GM18951 (cell line): ENCODE measurements at regions of chr3 and their contacts with region 1.

Region 1: GRCh38 chr3:50121416-50122032 is 32.8 kb downstream of the RBM5 start:
- POLR2A ChIP-seq: no peak

Region 2: DNA sequence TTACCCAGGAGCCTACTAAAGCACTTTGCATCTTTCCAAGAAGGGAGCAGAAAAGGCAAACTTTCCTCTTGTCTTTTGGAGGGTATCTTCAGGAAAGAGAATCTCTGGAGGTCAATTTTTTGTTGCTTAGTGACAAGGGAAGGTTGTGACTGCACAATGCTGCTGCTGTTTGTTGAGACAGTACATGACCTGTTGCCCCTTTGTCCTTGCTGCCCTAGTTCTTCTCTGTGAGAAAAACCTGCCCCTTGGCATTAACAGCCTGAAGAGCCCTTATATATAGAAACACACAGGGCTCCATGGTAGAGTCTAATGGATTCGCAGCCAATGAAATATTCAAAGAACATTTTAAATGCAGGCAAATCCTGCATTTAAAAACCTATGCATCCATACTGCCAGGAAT is 929.8 kb before region 1 on chr3:
- in situ Hi-C with region 1: no loop called
- POLR2A ChIP-seq: no peak

Region 3: GRCh38 chr3:50189274-50189673 is 67.8 kb after region 1 on chr3:
- in situ Hi-C with region 1: loop called (anchors 10 kb)
- POLR2A ChIP-seq: no peak